ENCODE measurements at regions of chr20 and their contacts with region 1.

Region 1: DNA sequence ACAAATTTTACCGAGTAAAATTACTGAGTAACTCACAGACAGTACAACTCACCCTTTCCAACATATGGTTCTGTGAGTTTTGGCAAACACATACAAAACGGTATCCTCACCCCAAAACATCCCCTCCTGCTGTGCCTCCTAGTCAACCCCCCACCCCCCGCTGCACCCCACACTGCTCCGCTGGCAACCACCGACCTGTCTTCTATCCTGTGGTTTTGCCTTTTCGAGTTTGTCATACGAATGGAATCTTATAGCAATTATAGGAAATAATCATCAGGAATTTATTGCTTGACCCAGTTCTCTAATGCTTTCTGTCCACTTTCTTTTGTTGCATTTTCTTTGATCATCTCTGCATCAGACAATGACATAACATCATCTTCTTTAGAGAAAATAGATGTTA is 312.3 kb downstream of the KIF16B start:
- DNase-seq: no peak
- ATAC-seq: no peak
- H3K4me3 ChIP-seq: no peak overlapping the region
- H3K27ac ChIP-seq: no peak overlapping the region
- H3K4me1 ChIP-seq: no peaks in the 10 kb centered on the region
- H3K27me3 ChIP-seq: peaks cover 6% of the 10 kb centered on the region; the same call in 1 of the 2 replicates
- CTCF ChIP-seq: no peak
- POLR2A ChIP-seq: no peak
- RAD21 ChIP-seq: no peak

Region 2: GRCh38 chr20:16201191-16201590 is 59.7 kb before region 1 on chr20:
- CTCF ChIA-PET with region 1: no interaction called
- POLR2A ChIA-PET with region 1: no interaction called
- RAD21 ChIA-PET with region 1: no interaction called
- intact Hi-C with region 1: no loop called
- DNase-seq: no peak
- ATAC-seq: no peak
- H3K4me3 ChIP-seq: no peak overlapping the region
- H3K27ac ChIP-seq: no peak overlapping the region
- H3K4me1 ChIP-seq: no peaks in the 10 kb centered on the region
- H3K27me3 ChIP-seq: no peaks in the 10 kb centered on the region
- CTCF ChIP-seq: no peak
- POLR2A ChIP-seq: no peak
- RAD21 ChIP-seq: no peak

Region 3: GRCh38 chr20:16423311-16424212 is 162.7 kb after region 1 on chr20:
- CTCF ChIA-PET with region 1: no interaction called
- POLR2A ChIA-PET with region 1: no interaction called
- RAD21 ChIA-PET with region 1: no interaction called
- intact Hi-C with region 1: loop called (anchors 10 kb)
- DNase-seq: no peak
- ATAC-seq: no peak
- H3K4me3 ChIP-seq: no peak overlapping the region
- H3K27ac ChIP-seq: no peak overlapping the region
- H3K4me1 ChIP-seq: no peaks in the 10 kb centered on the region
- H3K27me3 ChIP-seq: no peaks in the 10 kb centered on the region
- CTCF ChIP-seq: no peak
- POLR2A ChIP-seq: no peak
- RAD21 ChIP-seq: no peak